ENCODE measurements at regions of chr12 and their contacts with region 1.

Region 1: DNA sequence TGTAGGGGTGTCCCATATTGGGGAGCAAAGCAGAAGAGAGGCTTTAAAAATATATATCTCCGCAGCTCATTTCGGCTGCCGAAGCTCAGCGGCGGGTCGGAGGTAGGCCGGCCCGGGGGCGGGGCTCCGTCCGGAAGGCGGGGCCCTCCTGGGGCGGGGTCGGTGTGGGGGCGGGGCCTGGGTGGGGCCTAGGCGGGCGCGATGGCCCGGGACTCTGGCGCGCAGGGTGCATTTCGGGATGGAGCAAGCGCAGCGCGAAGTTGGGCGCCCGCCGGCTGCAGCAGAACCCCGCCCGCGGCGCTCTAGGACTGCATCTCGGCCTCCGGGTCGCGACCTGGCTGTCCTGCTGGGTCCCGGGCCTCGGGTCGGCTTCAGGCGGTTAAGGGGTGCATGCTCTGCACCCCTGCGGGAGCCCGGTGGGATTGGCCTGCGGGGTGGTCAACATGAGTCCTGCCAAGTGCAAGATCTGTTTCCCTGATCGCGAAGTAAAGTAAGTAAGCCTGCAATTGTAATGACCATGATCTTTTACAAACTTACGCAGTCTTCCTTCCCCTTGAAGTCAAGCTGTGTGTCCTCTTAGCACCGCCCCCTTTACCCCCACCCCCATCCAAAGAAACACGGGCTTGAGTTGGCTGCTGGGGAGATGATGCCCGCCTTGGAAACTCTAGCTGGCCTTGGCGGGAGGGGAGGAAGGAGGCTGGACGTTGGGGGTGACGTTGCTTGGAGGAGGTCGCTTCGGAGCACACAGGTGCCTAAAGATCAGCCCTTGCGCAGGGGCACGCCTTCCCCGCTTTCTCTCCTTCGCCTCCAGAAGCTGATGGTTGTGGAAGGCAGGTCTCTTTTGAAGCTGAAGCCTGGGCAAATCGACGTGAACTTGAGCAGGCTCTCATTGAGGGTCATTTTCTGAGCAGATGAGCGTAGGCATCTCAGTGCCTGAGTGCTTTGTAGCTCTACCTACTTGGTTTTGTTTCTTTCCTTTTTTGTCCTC is 38.4 kb downstream of the ACACB start:
- DNase-seq: peak; percentile 93
- ATAC-seq: peak; percentile 94
- H3K4me3 Mint-ChIP-seq: peak overlapping the region; percentile 82
- H3K27ac Mint-ChIP-seq: peak overlapping the region; percentile 85
- H3K4me1 Mint-ChIP-seq: peaks cover 17% of the 10 kb centered on the region
- H3K27me3 Mint-ChIP-seq: peaks cover 1% of the 10 kb centered on the region

Region 2: DNA sequence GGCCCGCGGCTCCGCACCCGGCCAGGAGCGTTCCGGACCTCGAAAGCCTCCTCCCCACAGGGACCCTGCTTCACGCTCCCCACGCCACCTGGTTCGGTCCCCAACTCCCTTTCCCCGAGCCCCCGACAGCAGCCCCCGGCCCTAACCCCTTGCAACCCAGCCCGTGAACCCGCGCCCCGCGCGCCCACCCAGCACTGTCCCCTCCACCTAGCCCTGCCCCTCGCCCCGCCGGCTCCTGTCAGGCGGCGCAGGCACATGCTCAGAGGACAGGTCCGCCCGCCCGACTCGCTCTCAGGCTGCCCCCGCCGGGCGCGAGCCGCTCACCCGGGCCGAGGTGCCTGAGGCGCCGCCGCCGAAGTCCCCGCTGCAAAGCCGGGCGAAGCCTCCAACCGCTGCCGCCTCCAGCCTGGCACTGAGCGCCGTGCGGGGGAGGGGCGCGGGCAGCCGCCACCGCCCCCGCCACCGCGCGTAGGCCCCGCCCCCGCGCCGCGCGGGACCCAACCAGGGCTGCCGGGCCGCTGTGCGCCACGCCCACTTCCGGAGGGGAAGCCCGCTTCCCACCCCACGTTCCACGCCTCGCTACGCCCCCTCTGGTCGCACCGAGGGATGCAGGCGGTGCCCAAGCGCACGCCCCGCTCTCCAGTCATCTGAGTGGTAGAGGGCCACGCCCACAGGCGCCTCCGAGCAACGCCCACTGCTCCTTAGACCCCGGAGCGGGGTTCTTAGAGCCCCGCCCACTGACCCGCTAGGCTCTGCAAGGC is 423.5 kb before region 1 on chr12 and contains the start of gene CORO1C:
- CTCF ChIA-PET with region 1: no interaction called
- POLR2A ChIA-PET with region 1: no interaction called
- intact Hi-C with region 1: loop called in 1 of 2 experiments (anchors 1 kb)
- DNase-seq: peak; percentile 98
- ATAC-seq: peak; percentile 78
- H3K4me3 Mint-ChIP-seq: peak within 1 kb of the TSS; percentile 88
- H3K27ac Mint-ChIP-seq: peak within 1 kb of the TSS; percentile 93
- H3K4me1 Mint-ChIP-seq: peaks cover 36% of the 10 kb centered on the region
- H3K27me3 Mint-ChIP-seq: no peaks in the 10 kb centered on the region
- total RNA-seq, gene CORO1C: 83.5 to 90.8 TPM

Region 3: DNA sequence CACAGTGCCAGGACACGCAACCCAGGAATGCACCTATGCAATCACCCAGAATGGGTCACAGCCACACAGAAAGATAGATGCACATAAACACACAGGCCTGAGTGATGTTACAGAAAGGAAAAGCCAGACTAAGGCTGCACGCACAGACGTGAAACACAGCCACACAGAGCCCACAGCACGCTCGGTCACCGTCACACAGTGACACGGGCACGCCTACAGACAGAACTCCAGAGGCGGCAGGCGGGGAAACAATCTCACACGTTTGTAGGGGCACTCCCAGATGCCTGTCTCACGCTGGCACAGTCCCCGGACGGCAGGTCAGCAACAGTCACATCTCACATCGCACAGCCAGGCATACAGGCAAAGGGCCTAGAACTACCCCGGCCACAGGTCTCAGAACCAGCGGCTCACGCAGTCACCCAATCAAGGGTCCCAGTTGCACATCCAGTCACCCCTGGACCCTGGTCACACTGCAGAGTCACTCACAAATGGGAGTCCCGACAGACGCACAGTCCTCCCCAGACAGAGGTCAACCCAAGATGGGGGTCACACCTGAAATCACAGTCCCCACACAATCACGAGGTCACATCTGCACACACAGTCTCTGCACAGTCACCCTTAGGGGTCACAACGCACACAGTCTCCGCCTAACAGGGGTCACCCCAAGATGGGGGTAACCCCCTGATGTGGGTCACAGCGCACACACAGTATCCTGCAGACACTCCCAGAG is 298.2 kb before region 1 on chr12:
- CTCF ChIA-PET with region 1: no interaction called
- POLR2A ChIA-PET with region 1: no interaction called
- intact Hi-C with region 1: loop called in 1 of 2 experiments (anchors 1 kb)
- DNase-seq: peak; percentile 81
- ATAC-seq: peak; percentile 64
- H3K4me3 Mint-ChIP-seq: peak overlapping the region; percentile 82
- H3K27ac Mint-ChIP-seq: peak overlapping the region; percentile 86
- H3K4me1 Mint-ChIP-seq: peaks cover 43% of the 10 kb centered on the region
- H3K27me3 Mint-ChIP-seq: peaks cover 2% of the 10 kb centered on the region

Region 4: DNA sequence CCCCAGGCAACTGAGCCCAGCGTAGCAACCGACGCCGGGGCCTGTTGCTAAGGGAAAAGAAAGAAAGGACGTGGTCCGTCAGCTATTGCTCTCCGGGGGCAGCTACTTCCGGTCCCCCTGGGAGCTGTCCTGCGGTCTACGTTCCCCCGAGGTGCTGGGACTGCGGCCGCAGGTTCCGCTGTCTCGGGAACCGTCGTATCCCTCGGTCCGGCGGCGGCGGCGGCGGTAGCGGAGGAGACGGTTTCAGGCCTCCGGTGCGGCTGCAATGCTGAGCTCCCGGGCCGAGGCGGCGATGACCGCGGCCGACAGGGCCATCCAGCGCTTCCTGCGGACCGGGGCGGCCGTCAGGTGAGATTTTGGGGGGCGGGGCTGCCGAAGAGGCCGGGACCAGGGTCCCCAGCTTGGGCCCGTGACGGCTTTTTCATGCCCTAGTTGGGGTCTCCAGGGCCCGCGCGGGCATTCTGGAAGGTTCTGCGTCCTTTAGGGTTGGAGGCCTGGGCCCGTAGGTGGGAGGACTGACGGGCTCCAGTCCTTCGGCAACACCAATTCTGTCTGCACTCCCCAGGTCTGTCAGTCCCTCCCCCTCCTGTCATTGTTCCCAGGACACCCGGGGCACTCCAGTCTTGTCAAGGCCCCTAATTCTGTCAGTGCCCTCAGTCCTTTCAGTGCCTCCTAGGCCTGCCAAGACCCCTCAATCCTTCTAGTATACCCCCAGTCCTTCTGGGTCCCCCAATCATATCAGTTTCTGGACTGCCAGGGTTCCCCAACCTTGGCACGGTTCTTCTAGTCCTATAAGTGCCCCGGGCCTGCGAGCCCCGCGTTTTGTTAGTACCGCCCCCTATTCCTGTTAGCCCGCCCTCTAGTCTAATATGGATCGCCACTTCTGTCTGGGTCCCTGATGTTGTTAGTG is 102.1 kb before region 1 on chr12 and contains the start of gene USP30:
- CTCF ChIA-PET with region 1: no interaction called
- POLR2A ChIA-PET with region 1: no interaction called
- intact Hi-C with region 1: loop called in 1 of 2 experiments (anchors 1 kb)
- DNase-seq: peak; percentile 91
- ATAC-seq: peak; percentile 70
- H3K4me3 Mint-ChIP-seq: peak within 1 kb of the TSS; percentile 86
- H3K27ac Mint-ChIP-seq: peak within 1 kb of the TSS; percentile 97
- H3K4me1 Mint-ChIP-seq: peaks cover 6% of the 10 kb centered on the region
- H3K27me3 Mint-ChIP-seq: no peaks in the 10 kb centered on the region
- total RNA-seq, gene USP30: 9.2 to 14.5 TPM

Region 5: GRCh38 chr12:109110988-109111495 is 43.7 kb before region 1 on chr12:
- CTCF ChIA-PET with region 1: interaction called, 4 read pairs
- POLR2A ChIA-PET with region 1: no interaction called
- intact Hi-C with region 1: loop called in 1 of 2 experiments (anchors 1 kb)
- DNase-seq: peak; percentile 74
- ATAC-seq: peak; percentile 86
- H3K4me3 Mint-ChIP-seq: peak overlapping the region; percentile 69
- H3K27ac Mint-ChIP-seq: peak overlapping the region; percentile 37
- H3K4me1 Mint-ChIP-seq: peaks cover 29% of the 10 kb centered on the region
- H3K27me3 Mint-ChIP-seq: no peaks in the 10 kb centered on the region

Region 6: DNA sequence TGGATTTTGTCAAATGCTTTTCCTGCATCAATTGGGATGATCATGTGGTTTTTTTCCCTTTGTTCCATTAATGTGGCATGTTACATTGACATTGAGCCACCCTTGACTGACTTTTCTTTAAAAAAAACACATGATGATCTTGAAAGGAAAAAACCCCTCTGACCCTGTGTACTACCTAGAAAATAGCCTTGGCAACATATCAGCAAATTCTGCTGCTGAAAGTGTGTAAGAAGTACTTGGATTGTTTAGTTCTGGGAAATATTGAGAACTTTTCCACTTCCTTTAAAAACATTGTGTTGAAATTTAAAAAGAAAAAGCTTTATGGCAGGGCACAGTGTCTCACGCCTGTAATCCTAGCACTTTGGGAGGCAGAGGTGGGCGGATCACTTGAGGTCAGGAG is 17.7 kb before region 1 on chr12:
- CTCF ChIA-PET with region 1: no interaction called
- POLR2A ChIA-PET with region 1: no interaction called
- intact Hi-C with region 1: no loop called
- DNase-seq: no peak
- ATAC-seq: no peak
- H3K4me3 Mint-ChIP-seq: no peak overlapping the region
- H3K27ac Mint-ChIP-seq: no peak overlapping the region
- H3K4me1 Mint-ChIP-seq: no peaks in the 10 kb centered on the region
- H3K27me3 Mint-ChIP-seq: no peaks in the 10 kb centered on the region

Region 7: GRCh38 chr12:109277899-109278762 is 123.4 kb after region 1 on chr12:
- CTCF ChIA-PET with region 1: no interaction called
- POLR2A ChIA-PET with region 1: no interaction called
- intact Hi-C with region 1: no loop called
- DNase-seq: no peak
- ATAC-seq: no peak
- H3K4me3 Mint-ChIP-seq: no peak overlapping the region
- H3K27ac Mint-ChIP-seq: no peak overlapping the region
- H3K4me1 Mint-ChIP-seq: no peaks in the 10 kb centered on the region
- H3K27me3 Mint-ChIP-seq: peaks cover 7% of the 10 kb centered on the region

Region 8: DNA sequence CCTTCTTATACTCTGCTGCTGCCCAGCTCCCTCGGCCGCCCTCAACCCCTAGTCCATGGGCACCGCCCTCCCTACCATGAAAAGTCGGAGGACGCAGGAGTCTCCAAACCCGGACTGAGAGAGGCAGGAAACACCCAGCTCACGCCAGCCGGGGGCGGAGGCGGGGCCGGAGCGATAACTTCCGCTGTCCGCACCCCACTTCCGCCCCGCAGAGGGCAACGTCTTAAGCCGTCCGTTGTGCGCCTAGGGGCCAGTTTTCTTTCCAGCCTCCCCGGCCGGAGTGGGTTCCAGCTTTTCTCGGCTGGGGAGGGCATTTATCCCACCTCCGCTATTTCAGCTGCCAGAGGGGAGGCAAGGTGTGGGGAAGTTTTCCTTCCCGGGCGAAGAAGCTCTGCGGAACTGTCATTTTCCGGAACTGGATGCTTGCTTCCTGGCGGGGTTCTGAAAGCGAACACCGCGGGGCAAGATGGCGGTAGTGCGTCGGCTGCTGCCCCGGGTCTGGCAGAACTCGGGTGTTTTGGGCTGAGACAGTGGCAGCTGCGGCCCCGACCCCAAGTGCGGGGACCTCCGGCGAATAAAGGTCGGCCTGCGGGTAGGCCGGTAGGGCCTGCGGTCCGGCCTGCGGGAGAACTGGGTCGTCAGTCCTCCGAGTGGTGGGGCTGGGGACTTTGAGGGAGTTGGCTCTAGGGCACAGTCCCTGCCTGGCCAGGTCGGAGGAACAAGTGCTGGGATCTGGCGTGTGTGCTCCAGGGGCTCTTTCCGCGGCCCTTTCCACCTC is 322.6 kb after region 1 on chr12 and contains the starts of genes KCTD10 and UBE3B:
- CTCF ChIA-PET with region 1: no interaction called
- POLR2A ChIA-PET with region 1: no interaction called
- intact Hi-C with region 1: loop called in 1 of 2 experiments (anchors 1 kb)
- DNase-seq: peak; percentile 92
- ATAC-seq: peak; percentile 97
- H3K4me3 Mint-ChIP-seq: peak within 1 kb of the TSS; percentile 95
- H3K27ac Mint-ChIP-seq: peak within 1 kb of the TSS; percentile 99
- H3K4me1 Mint-ChIP-seq: peaks cover 43% of the 10 kb centered on the region
- H3K27me3 Mint-ChIP-seq: no peaks in the 10 kb centered on the region
- total RNA-seq, gene KCTD10: 42.0 to 46.3 TPM
- total RNA-seq, gene UBE3B: 25.7 to 27.2 TPM

Measured in activated CD4-positive, alpha-beta T cell treated with anti-CD3 and anti-CD28 coated beads for 36 hours (primary cell).